Aorta (tissue), 5 donors: ENCODE measurements at regions of chr2 and their contacts with region 1.

Region 1: DNA sequence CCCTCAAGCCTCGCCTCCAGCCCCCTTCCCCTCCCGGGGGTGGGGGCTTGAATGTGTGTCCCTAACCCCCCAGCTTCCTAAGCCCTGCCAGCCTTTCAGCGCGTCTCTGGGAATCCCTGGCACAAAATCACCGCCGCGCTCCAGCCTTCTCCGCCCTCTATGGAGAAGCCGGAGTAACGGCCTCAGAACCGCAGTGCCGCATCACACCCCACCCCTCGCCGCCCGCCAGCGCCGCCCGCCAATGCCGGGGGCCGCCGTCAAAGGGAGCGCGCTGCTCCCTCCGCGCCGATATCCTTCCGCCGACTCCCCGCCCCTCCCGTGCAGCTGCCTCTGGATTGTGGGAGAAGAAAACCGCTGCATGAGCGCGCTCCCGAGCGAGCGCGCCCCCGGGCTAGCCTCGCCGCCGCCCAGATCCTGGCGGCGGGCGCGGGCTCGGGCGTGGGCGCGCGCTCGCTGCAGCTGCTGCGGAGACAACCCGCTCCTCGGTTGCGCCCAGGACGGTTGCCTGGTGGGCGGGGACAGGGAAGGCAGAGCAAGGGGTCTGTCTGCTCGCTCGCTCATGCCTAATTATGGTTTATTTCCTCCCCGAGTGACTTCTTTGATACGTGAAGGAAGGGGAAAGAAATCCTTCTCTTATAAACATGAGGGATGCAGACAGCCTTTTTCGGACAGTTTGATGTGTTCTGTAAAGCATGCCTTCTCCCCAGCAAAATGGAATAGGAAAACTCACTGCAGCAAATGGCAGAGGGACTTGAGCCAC is at the start of gene CCDC88A:
- DNase-seq: peak; percentile 99
- ATAC-seq: peak; percentile 99
- H3K4me3 ChIP-seq: peak within 1 kb of the TSS; percentile 51 to 81
- H3K27ac ChIP-seq: peak within 1 kb of the TSS; percentile 9 to 62
- H3K4me1 ChIP-seq: peaks cover 0 to 2% of the 10 kb centered on the region in 2 donors
- H3K27me3 ChIP-seq: no peaks in the 10 kb centered on the region
- total RNA-seq, gene CCDC88A: 78.0 to 92.4 TPM

Region 2: GRCh38 chr2:55282110-55282917 is 137.5 kb before region 1 on chr2:
- intact Hi-C with region 1: loop called (anchors 5 kb)
- DNase-seq: peak; percentile 95 to 98
- ATAC-seq: peak; percentile 99
- H3K4me3 ChIP-seq: peak overlapping the region; percentile 43 to 46
- H3K27ac ChIP-seq: peak overlapping the region; percentile 45 to 88
- H3K4me1 ChIP-seq: no peaks in the 10 kb centered on the region
- H3K27me3 ChIP-seq: no peaks in the 10 kb centered on the region

Region 3: DNA sequence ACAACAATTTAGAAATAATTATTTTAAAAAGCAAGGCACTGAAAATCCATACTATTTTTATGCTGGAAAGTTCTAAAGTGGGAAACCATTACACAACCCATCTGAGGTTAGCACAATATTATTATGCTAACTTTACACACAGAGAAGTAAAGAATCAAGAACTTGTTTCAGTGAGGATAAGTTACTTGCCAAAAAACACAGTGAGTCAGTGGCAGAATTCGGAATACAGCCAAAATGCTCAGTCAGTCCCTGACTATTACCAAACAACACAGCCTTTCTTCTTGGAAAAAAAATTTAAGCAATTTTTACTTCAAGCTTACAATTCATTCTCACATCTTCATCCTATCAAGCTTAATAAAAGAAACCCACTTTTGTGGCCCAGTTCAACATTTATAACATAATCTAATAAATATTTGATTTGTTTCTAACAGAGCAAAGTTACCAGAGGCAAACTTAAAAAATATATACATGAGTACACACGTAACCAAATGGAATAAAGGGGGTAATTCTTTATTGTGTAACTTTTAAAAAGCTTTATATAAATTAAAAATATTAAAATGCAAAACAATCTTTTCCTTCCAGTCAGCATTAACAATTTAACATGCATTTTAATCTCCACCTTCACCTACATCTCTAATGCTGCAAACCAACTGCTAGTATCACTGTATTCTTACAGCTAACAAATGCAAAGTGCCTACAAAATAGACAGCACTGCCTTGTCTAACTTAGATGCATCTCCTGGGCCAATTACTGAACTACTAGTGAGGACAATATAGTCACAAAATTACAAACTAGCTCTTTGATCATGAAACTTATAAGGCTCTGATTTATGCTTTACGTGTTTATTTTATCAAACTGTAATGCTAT is 55.4 kb before region 1 on chr2:
- intact Hi-C with region 1: loop called in 1 of 2 experiments (anchors 10 kb)
- DNase-seq: no peak
- ATAC-seq: peak; percentile 93
- H3K4me3 ChIP-seq: no peak overlapping the region
- H3K27ac ChIP-seq: no peak overlapping the region
- H3K4me1 ChIP-seq: peaks cover 2 to 3% of the 10 kb centered on the region in 2 donors
- H3K27me3 ChIP-seq: no peaks in the 10 kb centered on the region